HepG2 (cell line): ENCODE measurements at regions of chr5 and their contacts with region 1.

Region 1: DNA sequence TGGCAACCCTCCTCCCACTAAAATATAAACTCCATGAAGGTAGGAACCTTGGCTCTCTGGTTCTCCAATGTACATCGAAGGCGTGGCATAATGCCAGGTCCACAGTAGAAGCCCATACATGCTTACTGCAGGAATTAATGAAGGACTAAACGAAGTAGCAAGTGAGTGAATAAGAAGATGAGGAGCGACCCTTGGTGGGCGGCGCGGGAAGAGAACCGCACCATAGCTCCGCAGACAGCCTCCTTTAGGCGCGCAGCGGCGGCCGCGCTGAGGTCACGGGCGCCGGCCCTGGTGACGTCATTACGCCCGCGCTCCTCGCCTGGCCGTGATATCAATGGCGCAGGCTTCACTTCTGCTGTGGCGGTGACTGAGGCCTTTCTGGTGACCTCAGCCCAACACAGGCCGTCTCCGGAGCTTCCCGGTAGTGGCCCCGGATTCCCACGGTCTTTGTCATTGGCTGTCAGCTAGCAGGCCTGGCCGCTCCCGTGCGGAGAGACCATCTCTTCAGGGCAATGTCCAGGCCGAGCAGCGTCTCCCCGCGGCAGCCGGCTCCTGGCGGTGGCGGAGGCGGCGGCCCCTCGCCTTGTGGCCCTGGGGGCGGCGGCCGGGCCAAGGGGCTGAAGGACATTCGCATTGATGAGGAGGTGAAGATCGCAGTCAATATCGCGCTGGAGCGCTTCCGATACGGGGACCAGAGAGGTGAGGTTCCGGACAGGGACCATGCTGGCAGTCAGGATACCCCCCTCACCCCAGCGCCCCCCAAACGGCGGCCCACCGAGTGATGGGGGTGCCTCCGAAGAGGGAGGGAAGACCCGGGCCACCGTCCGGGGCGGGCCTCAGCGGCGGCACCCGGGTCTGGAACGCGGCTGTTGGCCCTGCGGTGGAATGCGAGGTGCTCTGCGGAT is at the start of gene YTHDC2:
- DNase-seq: peak; percentile 77
- ATAC-seq: peak; percentile 95
- H3K4me3 ChIP-seq: peak within 1 kb of the TSS; percentile 85 to 91 (median 87)
- H3K27ac ChIP-seq: peak within 1 kb of the TSS; percentile 94
- H3K4me1 ChIP-seq: peaks cover 38% of the 10 kb centered on the region
- H3K27me3 ChIP-seq: no peaks in the 10 kb centered on the region; a peak in 1 of 5 replicates
- CTCF ChIP-seq: peak; percentile 67
- EP300 ChIP-seq: no peak
- POLR2A ChIP-seq: peak; percentile 78 to 82
- RAD21 ChIP-seq: peak; percentile 42; the same call in 1 of the 2 replicates
- total RNA-seq, gene YTHDC2: 17.8 and 21.2 TPM in 2 replicates

Region 2: DNA sequence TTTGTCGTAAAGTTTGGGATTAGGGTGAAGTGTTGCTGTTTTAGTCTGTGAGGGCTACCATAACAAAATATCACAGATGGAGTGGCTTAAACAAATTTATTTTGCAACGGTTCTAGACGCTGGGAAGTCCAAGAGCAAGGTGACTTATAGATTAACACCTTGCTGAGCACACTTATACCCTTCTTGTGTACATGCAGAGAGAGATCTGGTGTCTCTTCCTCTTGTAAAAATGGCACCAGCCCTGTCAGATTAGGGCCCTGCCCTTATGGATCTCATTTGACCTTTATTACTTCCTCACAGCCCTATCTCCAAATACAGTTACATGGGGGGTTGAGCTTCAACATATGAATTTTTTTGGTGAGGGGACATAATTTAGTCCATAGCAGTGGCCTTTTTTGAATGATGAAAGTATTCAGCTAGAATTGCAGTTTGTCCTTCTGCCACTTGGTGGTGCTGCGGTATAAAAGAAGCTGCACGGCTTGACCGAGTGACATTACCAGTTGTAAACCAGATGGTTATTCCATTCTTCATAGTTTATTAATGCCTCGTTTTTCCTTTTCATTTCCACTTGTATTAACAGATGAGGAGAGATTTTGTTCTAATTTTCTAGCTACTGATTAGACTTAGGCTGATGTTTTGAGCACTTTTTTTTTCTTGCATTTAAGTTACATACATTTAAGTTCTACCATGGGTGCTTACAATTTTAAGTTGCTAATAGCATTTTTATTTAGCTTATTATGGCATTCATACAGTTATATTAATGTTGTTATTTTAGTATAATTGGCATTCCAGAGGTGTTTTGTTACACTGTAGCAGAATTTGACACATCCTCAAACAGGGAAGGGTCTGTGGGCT is 517.6 kb before region 1 on chr5:
- CTCF ChIA-PET with region 1: no interaction called
- POLR2A ChIA-PET with region 1: no interaction called
- in situ Hi-C with region 1: no loop called
- intact Hi-C with region 1: loop called (anchors 1 kb)
- DNase-seq: peak; percentile 50
- ATAC-seq: peak; percentile 82
- H3K4me3 ChIP-seq: no peak overlapping the region
- H3K27ac ChIP-seq: no peak overlapping the region
- H3K4me1 ChIP-seq: 0 out of 2 replicates have a peak, but pooled peaks cover 10% of the 10 kb centered on the region
- H3K27me3 ChIP-seq: no peaks in the 10 kb centered on the region
- CTCF ChIP-seq: peak; percentile 87
- EP300 ChIP-seq: no peak
- POLR2A ChIP-seq: no peak
- RAD21 ChIP-seq: peak; percentile 72

Region 3: GRCh38 chr5:113336975-113337374 is 176.7 kb before region 1 on chr5:
- CTCF ChIA-PET with region 1: no interaction called
- POLR2A ChIA-PET with region 1: no interaction called
- in situ Hi-C with region 1: no loop called
- intact Hi-C with region 1: loop called (anchors 2 kb)
- DNase-seq: peak; percentile 46
- ATAC-seq: peak; percentile 96
- H3K4me3 ChIP-seq: no peak overlapping the region
- H3K27ac ChIP-seq: no peak overlapping the region
- H3K4me1 ChIP-seq: no peaks in the 10 kb centered on the region
- H3K27me3 ChIP-seq: no peaks in the 10 kb centered on the region
- CTCF ChIP-seq: peak; percentile 62
- EP300 ChIP-seq: no peak
- POLR2A ChIP-seq: no peak
- RAD21 ChIP-seq: peak; percentile 38; the same call in 1 of the 2 replicates

Region 4: GRCh38 chr5:113447498-113448050 is 66.1 kb before region 1 on chr5:
- CTCF ChIA-PET with region 1: interaction called, 8 read pairs
- POLR2A ChIA-PET with region 1: no interaction called
- in situ Hi-C with region 1: no loop called
- intact Hi-C with region 1: loop called (anchors 1 kb)
- DNase-seq: peak; percentile 23
- ATAC-seq: peak; percentile 98
- H3K4me3 ChIP-seq: no peak overlapping the region
- H3K27ac ChIP-seq: no peak overlapping the region
- H3K4me1 ChIP-seq: no peaks in the 10 kb centered on the region
- H3K27me3 ChIP-seq: no peaks in the 10 kb centered on the region; a peak in 2 of 5 replicates
- CTCF ChIP-seq: peak; percentile 58
- EP300 ChIP-seq: no peak
- POLR2A ChIP-seq: no peak
- RAD21 ChIP-seq: no peak